Right cardiac atrium (tissue), 5 donors: ENCODE measurements at regions of chr6 and their contacts with region 1.

Region 1: GRCh38 chr6:142885182-142885867 is 59.7 kb downstream of the HIVEP2 start:
- DNase-seq: no peak
- ATAC-seq: peak; percentile 91 to 94
- H3K4me3 ChIP-seq: peak overlapping the region; percentile 71
- H3K27ac ChIP-seq: peak overlapping the region; percentile 77
- H3K4me1 ChIP-seq: peaks cover 2% of the 10 kb centered on the region
- H3K27me3 ChIP-seq: no peaks in the 10 kb centered on the region

Region 2: DNA sequence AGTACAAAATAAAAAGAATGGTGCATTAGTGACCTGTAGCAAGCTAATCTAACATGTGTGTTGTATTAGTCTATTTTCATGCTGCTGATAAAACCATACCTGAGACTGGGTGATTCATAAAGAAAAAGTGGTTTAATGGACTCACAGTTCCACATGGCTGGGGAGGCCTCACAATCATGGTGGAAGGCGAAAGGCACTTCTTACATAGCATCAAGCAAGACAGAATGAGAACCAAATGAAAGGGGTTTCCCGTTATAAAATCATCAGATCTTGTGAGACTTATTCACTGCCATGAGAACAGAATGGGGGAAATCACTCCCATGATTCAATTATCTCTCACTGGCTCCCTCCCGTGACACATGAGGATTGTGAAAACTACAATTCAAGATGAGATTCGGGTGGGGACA is 130.0 kb after region 1 on chr6:
- intact Hi-C with region 1: no loop called
- DNase-seq: no peak
- ATAC-seq: no peak
- H3K4me3 ChIP-seq: no peak overlapping the region
- H3K27ac ChIP-seq: no peak overlapping the region
- H3K4me1 ChIP-seq: no peaks in the 10 kb centered on the region
- H3K27me3 ChIP-seq: no peaks in the 10 kb centered on the region

Region 3: GRCh38 chr6:143040018-143040417 is 154.7 kb after region 1 on chr6:
- intact Hi-C with region 1: loop called in 1 of 4 experiments (anchors 10 kb)
- DNase-seq: no peak
- ATAC-seq: no peak
- H3K4me3 ChIP-seq: no peak overlapping the region
- H3K27ac ChIP-seq: no peak overlapping the region
- H3K4me1 ChIP-seq: no peaks in the 10 kb centered on the region
- H3K27me3 ChIP-seq: no peaks in the 10 kb centered on the region